Activated T-helper 2 cell treated with anti-CD3 and anti-CD28 coated beads, Interferon-gamma antibody, Interleukin-2, Interleukin-4, amounts not matched to agents 10 μg/mL and 5 μg/mL and 100 μg/mL, durations not matched to agents 14 hours and 24 hours and 36 hours (primary cell): ENCODE measurements at regions of chrX and their contacts with region 1.

Region 1: GRCh38 chrX:150482537-150483206 is 85.7 kb upstream of the MTM1 start:
- DNase-seq: peak; percentile 30
- H3K4me3 Mint-ChIP-seq: peak overlapping the region; percentile 75
- H3K27ac Mint-ChIP-seq: peak overlapping the region; percentile 99
- H3K4me1 Mint-ChIP-seq: peaks cover 55% of the 10 kb centered on the region
- H3K27me3 Mint-ChIP-seq: no peaks in the 10 kb centered on the region

Region 2: GRCh38 chrX:150200820-150201287 is 281.8 kb before region 1 on chrX:
- intact Hi-C with region 1: loop called (anchors 5 kb)
- DNase-seq: peak; percentile 28
- H3K4me3 Mint-ChIP-seq: no peak overlapping the region
- H3K27ac Mint-ChIP-seq: no peak overlapping the region
- H3K4me1 Mint-ChIP-seq: peaks cover 8% of the 10 kb centered on the region
- H3K27me3 Mint-ChIP-seq: no peaks in the 10 kb centered on the region

Region 3: DNA sequence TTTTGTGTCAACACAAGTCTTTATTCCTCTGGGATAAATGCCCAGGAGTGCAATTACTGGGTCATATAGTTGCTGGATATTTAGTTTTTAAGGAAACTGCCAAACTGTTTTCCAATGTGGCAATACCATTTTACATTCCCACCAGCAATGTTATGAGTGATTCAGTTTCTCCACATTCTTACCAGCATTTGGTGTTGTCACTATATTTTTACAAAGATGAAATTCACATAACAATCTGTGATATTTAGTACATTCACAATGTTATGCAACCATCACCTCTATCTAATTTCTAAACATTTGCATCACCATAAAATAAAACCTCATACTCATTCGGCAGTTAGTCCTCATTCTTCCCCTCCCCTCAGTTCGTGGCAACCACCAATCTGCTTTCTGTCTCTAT is 44.5 kb before region 1 on chrX:
- intact Hi-C with region 1: no loop called
- DNase-seq: no peak
- H3K4me3 Mint-ChIP-seq: no peak overlapping the region
- H3K27ac Mint-ChIP-seq: no peak overlapping the region
- H3K4me1 Mint-ChIP-seq: peaks cover 11% of the 10 kb centered on the region
- H3K27me3 Mint-ChIP-seq: no peaks in the 10 kb centered on the region

Region 4: GRCh38 chrX:150635952-150636351 is 153.3 kb after region 1 on chrX:
- intact Hi-C with region 1: loop called (anchors 5 kb)
- DNase-seq: no peak
- H3K4me3 Mint-ChIP-seq: no peak overlapping the region
- H3K27ac Mint-ChIP-seq: peak overlapping the region; percentile 74
- H3K4me1 Mint-ChIP-seq: peaks cover 8% of the 10 kb centered on the region
- H3K27me3 Mint-ChIP-seq: no peaks in the 10 kb centered on the region

Region 5: GRCh38 chrX:151167791-151168345 is 685.2 kb after region 1 on chrX:
- intact Hi-C with region 1: no loop called
- DNase-seq: no peak
- H3K4me3 Mint-ChIP-seq: no peak overlapping the region
- H3K27ac Mint-ChIP-seq: no peak overlapping the region
- H3K4me1 Mint-ChIP-seq: no peaks in the 10 kb centered on the region
- H3K27me3 Mint-ChIP-seq: peaks cover 8% of the 10 kb centered on the region

Region 6: GRCh38 chrX:151396825-151397740 is 914.4 kb after region 1 on chrX and contains the start of gene VMA21:
- intact Hi-C with region 1: loop called (anchors 10 kb)
- DNase-seq: peak; percentile 76
- H3K4me3 Mint-ChIP-seq: peak within 1 kb of the TSS; percentile 87
- H3K27ac Mint-ChIP-seq: peak within 1 kb of the TSS; percentile 89
- H3K4me1 Mint-ChIP-seq: peaks cover 36% of the 10 kb centered on the region
- H3K27me3 Mint-ChIP-seq: no peaks in the 10 kb centered on the region
- total RNA-seq, gene VMA21: 40.8 and 43.1 TPM in 2 replicates